ENCODE measurements at regions of chr22 and their contacts with region 1.

Region 1: DNA sequence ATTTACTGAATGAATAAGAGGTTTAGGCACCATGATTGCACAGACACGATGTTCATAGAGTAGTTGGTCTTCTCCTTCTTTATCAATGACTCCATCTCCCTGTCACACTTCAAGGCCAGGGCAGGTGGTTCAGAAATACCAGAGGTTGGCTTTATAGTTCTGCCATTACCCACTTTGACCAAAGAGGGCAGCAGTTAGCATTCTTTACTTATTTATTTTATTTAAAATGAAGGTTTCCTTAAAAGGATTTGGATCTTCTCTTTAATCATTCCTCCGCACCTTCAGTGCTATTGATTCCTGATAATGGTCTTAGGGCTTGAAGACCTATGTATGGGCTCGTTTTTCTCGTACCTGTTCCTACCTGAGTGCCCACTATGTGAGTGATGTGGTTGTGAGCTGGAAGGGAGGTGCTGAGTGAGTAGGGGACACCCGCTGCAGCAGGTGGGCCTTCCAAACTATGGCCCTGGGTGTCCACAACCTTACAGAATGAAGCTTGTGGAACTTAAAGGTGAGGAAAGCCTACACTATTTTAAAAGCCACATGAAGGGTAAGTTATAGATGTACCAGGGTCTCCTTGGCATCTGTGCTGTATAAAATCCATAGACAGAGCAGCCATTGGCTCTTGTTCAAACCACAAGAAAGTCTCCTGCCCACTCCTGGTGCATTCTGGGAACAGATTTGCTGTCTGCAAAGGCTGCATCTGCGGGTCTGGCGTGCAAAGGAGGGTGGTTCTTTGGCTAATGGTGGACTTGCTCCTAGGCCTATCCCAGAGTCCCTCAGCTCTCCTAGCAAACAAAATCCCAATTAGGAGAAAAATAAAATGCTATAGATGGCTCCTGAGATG is 35.0 kb downstream of the TIMP3 start:
- DNase-seq: no peak
- H3K4me3 ChIP-seq: no peak overlapping the region
- H3K27ac ChIP-seq: no peak overlapping the region
- H3K4me1 ChIP-seq: peaks cover 15% of the 10 kb centered on the region
- H3K27me3 ChIP-seq: no peaks in the 10 kb centered on the region
- CTCF ChIP-seq: peak in 2 of 3 donors; percentile 18 to 40
- EP300 ChIP-seq: no peak
- POLR2A ChIP-seq: no peak

Region 2: DNA sequence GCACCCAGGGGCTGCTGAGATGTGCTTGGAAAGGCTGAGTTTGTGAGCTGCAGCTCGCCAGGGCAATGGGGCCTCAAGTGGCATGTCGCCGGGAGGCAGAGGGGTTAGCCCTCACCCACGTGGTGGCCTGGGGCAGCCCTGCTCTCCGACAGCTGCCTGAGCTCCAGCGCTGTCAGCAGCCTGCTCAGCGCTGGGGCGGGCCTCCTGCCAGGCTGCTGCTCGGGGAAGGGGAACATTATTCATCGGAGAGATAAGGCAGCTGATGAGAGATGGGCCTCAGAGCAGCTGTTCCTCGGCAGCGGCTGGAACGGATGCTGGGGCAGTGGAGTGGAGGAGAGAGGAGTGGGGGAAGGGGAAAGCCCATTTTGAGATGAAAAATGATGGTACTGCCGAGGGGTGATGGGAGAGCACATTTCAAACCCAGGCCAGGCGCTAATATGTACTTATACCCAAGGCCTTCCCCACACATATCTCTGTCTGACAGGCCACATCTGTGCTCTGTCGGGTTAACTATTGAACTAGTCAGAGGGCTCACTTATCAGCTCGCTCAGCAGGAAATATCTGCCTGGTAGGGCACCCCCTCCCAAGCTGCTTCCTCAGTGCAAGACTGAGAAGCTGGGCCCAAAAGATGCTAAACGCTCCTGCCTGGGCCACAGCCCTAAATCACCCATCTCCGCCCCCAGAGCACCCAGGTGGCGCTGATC is 44.5 kb after region 1 on chr22:
- intact Hi-C with region 1: loop called in 1 of 4 experiments (anchors 10 kb)
- DNase-seq: peak; percentile 88 to 94 (median 91)
- H3K4me3 ChIP-seq: no peak overlapping the region
- H3K27ac ChIP-seq: peak overlapping the region in 1 of 2 donors; percentile 25
- H3K4me1 ChIP-seq: peaks cover 7% of the 10 kb centered on the region
- H3K27me3 ChIP-seq: no peaks in the 10 kb centered on the region
- CTCF ChIP-seq: no peak
- EP300 ChIP-seq: no peak
- POLR2A ChIP-seq: no peak